ENCODE measurements at regions of chr20 and their contacts with region 1.

Region 1: GRCh38 chr20:38645980-38646858 is 44.6 kb downstream of the ARHGAP40 start:
- DNase-seq: peak; percentile 64 to 82 (median 74)
- H3K4me3 ChIP-seq: peak overlapping the region in 1 of 4 donors; percentile 41
- H3K27ac ChIP-seq: no peak overlapping the region
- H3K4me1 ChIP-seq: peaks cover 0 to 5% of the 10 kb centered on the region in 2 donors
- H3K27me3 ChIP-seq: peaks cover 11% of the 10 kb centered on the region
- CTCF ChIP-seq: peak; percentile 81 to 98 (median 94)
- POLR2A ChIP-seq: no peak

Region 2: DNA sequence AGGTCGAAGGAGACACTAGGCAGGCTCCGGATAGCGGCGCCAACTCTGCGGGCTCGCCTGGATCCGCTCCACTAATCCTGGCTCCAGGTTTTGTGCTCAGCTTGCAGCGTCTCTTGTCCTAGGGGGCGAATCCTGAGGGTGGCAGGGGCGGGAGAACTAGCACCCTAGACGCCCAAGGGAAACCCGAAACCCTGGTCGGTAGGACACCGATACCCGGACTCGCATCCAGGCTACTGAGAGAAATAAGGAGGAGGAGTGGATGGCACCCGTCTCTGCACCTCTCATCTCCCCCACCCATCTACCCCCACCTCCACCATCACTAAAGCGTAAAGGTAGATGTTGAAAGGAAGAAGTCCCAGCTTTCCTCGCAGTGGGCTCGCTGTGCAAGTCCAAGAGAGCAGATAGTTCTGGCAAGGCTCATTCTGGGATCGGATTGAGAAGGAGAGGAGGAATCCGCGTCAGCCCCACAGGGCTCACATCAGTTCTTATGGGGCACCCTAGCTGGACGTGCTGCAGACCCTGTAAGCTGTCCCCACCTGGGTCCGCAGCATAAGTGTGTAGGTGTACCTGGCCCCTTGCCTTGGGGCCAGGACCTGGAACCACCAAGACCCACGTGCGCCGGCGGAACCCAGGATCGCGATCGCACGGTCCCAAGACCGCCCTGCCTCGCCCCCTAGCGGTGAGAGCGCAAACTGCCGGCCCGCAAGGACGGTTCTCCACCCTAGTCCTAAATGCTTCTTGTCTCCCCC is 84.9 kb after region 1 on chr20:
- intact Hi-C with region 1: loop called (anchors 2 to 5 kb)
- DNase-seq: peak; percentile 51 to 78 (median 72)
- H3K4me3 ChIP-seq: peak overlapping the region in 1 of 4 donors; percentile 17
- H3K27ac ChIP-seq: no peak overlapping the region
- H3K4me1 ChIP-seq: peaks cover 0 to 10% of the 10 kb centered on the region in 2 donors
- H3K27me3 ChIP-seq: peaks cover 82% of the 10 kb centered on the region
- CTCF ChIP-seq: peak; percentile 84 to 98 (median 91)
- POLR2A ChIP-seq: no peak

Region 3: GRCh38 chr20:38751360-38751976 is 105.2 kb after region 1 on chr20:
- intact Hi-C with region 1: loop called in 1 of 2 experiments (anchors 2 kb)
- DNase-seq: peak in 1 of 7 donors; percentile 29
- H3K4me3 ChIP-seq: no peak overlapping the region
- H3K27ac ChIP-seq: no peak overlapping the region
- H3K4me1 ChIP-seq: peaks cover 10 to 13% of the 10 kb centered on the region in 2 donors
- H3K27me3 ChIP-seq: no peaks in the 10 kb centered on the region
- CTCF ChIP-seq: peak; percentile 35 to 76 (median 71)
- POLR2A ChIP-seq: no peak

Region 4: GRCh38 chr20:38789503-38790199 is 143.4 kb after region 1 on chr20:
- intact Hi-C with region 1: loop called in 1 of 2 experiments (anchors 5 kb)
- DNase-seq: no peak
- H3K4me3 ChIP-seq: no peak overlapping the region
- H3K27ac ChIP-seq: no peak overlapping the region
- H3K4me1 ChIP-seq: no peaks in the 10 kb centered on the region
- H3K27me3 ChIP-seq: no peaks in the 10 kb centered on the region
- CTCF ChIP-seq: no peak
- POLR2A ChIP-seq: no peak

Region 5: DNA sequence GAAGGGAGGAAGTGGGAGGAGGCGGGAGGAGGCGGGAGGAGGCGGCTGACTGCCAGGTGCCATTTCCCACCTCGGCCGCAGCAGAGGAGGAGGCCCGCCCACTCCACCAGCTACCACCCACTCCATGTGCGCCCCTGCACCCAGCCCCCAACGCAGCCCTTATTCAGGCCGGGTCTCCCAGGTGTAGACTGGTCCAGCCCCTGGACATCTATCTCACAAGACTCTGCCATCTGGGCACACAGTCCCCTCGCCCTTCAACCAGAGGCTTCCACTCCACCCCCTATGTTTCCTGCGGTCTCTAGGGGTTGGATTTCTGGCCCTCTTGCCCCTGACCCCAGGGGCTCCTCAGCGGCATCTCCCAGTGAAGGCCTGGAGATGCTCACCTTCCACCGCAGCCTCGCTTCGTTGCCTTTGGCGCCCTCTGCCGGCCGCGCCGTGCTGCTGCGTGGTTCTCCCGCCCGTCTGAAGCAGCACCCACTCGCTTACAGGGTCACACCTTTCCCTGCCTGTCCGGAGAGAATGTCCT is 247.4 kb after region 1 on chr20:
- intact Hi-C with region 1: loop called (anchors 5 to 10 kb)
- DNase-seq: peak; percentile 36 to 84 (median 61)
- H3K4me3 ChIP-seq: no peak overlapping the region
- H3K27ac ChIP-seq: peak overlapping the region in 1 of 5 donors; percentile 29
- H3K4me1 ChIP-seq: no peaks in the 10 kb centered on the region
- H3K27me3 ChIP-seq: no peaks in the 10 kb centered on the region
- CTCF ChIP-seq: peak; percentile 49 to 88 (median 77)
- POLR2A ChIP-seq: no peak

Region 6: DNA sequence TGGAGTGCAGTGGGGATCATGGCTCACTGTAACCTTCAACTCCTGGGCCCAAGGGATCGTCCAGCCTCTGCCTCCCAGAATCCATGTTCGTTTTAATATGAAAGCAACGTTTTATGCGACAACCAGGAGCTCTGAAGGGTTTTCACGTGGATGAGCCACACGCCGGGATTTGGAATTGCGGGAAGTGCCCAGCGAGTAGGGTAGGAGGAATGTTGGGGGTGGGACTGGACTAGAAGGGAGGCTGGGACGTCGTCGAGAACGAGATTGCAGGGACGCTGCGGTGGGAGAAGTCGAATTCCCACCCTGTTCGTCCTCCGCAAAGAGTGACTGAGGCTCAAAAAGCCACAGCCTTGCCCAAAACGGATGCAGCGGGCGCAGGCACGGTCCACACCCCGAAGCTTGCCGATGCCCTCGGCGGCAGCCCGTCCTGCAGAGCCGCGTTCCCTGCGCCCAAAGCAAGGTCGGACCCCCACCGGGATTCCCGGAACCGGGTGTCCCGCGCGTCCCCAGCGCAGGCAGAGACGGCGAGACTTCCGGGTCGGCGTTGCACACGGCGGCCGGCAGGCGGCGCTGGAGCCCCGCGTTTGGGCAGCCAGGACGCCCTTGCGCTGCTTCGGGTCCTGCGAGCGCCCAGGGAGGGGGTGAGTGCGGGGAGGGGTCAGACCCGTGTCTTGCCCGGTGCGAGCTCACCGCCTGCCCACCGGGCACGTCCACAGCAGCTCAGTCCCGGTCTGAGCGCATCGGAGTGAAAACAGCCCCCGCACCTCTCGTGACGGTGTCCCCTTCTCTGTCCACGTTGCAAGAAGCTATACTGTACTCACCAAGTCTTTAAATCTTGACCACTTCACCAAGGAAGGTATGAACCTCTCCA is 403.7 kb after region 1 on chr20:
- intact Hi-C with region 1: loop called in 1 of 2 experiments (anchors 10 kb)
- DNase-seq: peak; percentile 69 to 85 (median 76)
- H3K4me3 ChIP-seq: peak overlapping the region; percentile 17 to 65 (median 46)
- H3K27ac ChIP-seq: peak overlapping the region in 3 of 5 donors; percentile 25 to 80 (median 56)
- H3K4me1 ChIP-seq: peaks cover 0 to 7% of the 10 kb centered on the region in 2 donors
- H3K27me3 ChIP-seq: no peaks in the 10 kb centered on the region
- CTCF ChIP-seq: peak; percentile 91 to 99 (median 95)
- POLR2A ChIP-seq: no peak